Aorta (tissue), 5 donors: ENCODE measurements at regions of chr11 and their contacts with region 1.

Region 1: DNA sequence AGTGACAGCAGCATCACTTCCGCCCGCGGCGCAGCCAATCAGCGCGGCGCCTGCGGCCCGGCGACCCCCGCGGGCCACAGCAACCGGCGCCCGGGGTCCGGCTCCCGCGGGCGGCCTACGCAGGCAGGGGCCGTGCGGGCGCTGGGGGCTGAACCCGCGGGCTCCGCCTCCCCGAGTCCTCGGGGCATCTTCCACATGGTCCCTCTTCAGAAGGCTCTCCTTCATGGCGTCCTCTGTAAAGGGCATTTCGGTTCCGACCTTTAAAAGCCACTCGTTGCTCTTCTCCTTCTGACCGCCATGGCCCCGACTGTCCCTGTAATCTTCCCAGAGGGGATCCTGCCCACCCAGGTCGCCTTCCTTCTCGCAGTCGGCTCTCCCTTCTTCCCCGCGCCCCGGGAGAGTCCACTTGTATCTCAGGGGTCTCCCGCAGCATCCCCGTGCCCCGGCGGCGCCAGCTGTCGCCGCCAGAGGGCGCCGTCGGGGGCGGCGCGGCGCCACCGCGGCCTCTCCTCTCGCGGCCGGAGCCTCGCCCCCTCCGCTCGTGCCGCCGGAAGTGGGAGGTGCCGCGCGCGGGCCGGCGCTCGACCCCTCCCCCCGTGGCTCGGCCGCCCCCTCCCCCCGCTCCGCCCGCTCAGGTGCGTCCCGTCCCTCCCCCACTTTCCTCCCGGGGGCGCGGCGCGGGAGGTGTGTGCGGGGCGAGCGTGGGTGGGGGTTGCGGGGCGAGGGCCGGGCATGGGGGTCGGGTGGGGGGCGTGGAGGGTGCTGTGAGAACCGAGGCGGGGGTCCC is at the start of gene RNF214:
- DNase-seq: peak; percentile 82 to 93
- ATAC-seq: peak; percentile 92
- H3K4me3 ChIP-seq: peak within 1 kb of the TSS; percentile 89 to 91
- H3K27ac ChIP-seq: peak within 1 kb of the TSS; percentile 74 to 78
- H3K4me1 ChIP-seq: peaks cover 0 to 4% of the 10 kb centered on the region in 2 donors
- H3K27me3 ChIP-seq: no peaks in the 10 kb centered on the region
- total RNA-seq, gene RNF214: 27.2 to 32.7 TPM

Region 2: DNA sequence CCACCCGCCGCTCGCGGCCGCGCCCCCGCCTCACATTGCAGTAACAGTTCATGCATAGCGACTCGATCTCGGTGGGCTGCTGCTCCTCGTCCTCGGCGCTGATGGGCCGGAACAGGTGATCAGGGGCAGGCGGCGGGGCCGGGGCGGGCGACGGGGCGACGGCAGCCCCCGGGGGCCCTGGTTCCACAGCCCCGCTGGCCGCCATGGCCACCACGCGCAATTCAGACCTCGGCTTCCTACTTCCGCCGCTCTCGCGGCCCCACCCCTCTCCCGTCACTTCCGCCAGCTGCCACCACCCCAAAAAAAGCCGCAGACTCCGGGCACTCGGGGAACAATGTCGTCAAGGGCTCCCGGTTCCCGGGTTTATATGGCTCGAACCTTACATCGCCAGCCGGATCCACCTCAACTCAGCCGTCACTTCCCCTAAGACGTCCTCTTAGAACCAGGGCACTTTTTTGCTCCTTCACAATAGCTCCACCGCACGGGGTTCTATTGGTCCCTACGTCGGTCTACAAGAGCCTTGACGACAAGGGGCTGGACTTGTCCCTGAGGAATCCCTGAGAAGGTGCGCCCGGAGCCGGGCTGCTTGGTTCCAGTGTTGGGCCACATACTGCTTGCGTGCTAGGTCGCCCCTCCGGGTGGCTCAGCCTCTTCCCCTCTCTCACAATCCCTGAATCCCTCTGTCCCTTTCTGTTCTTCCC is 444.3 kb before region 1 on chr11 and contains the start of gene ZPR1:
- intact Hi-C with region 1: loop called in 1 of 2 experiments (anchors 5 kb)
- DNase-seq: peak; percentile 91 to 95
- ATAC-seq: peak; percentile 92
- H3K4me3 ChIP-seq: peak within 1 kb of the TSS; percentile 73 to 80
- H3K27ac ChIP-seq: peak within 1 kb of the TSS in 1 of 2 donors; percentile 66
- H3K4me1 ChIP-seq: peaks cover 0 to 4% of the 10 kb centered on the region in 2 donors
- H3K27me3 ChIP-seq: no peaks in the 10 kb centered on the region
- total RNA-seq, gene ZPR1: 31.5 to 48.2 TPM

Region 3: GRCh38 chr11:116885951-116886655 is 346.2 kb before region 1 on chr11:
- intact Hi-C with region 1: loop called in 1 of 2 experiments (anchors 5 kb)
- DNase-seq: no peak
- ATAC-seq: peak; percentile 26
- H3K4me3 ChIP-seq: no peak overlapping the region
- H3K27ac ChIP-seq: no peak overlapping the region
- H3K4me1 ChIP-seq: no peaks in the 10 kb centered on the region
- H3K27me3 ChIP-seq: no peaks in the 10 kb centered on the region

Region 4: GRCh38 chr11:117143871-117144476 is 88.3 kb before region 1 on chr11 and contains the start of gene PAFAH1B2:
- intact Hi-C with region 1: loop called in 1 of 2 experiments (anchors 10 kb)
- DNase-seq: peak; percentile 97 to 98
- ATAC-seq: peak; percentile 99
- H3K4me3 ChIP-seq: peak within 1 kb of the TSS; percentile 70 to 80
- H3K27ac ChIP-seq: peak within 1 kb of the TSS; percentile 71 to 88
- H3K4me1 ChIP-seq: peaks cover 0 to 2% of the 10 kb centered on the region in 2 donors
- H3K27me3 ChIP-seq: no peaks in the 10 kb centered on the region
- total RNA-seq, gene PAFAH1B2: 69.9 to 73.5 TPM

Region 5: DNA sequence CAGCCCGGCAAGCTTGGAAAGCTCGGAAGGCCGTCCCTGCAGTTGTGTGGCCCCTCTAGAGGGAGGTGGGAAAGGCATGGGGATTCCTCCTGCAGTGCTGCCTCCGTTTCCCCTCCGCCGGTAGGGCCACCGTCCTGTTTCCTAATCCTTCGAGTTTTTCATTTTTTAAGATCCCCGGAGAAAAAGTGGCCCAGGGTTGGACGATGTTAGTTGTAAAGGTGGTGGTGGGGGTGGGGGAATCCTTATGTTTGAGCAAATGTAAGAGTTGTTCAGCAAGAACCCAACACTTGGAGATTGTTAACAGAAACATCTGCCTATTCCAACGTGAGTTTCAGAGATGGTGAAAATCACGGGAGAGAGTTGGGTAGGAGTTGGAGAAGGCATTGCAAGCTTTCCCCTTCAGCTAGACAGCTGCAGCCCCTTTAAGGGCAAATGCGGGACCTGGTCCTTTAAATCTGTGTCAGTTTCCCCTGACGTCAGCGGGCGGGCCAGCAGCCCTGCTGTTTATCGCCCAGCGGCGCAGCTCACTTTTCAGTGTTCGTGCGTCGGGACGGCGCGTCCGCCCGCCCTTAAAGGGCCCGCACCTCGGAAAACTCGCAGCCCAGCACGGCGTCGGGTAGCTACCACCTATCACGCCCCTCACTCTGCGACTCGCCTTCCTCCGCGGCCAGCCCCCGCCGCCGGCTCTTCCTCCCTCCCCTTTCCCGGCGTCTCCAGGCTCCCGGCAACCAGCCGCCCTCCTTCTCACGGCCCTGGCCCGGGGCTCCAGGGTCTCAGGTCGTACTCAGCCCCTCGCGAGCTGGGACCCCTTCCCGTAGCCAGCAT is 53.9 kb before region 1 on chr11 and contains the start of gene SIDT2:
- intact Hi-C with region 1: loop called (anchors 2 to 5 kb)
- DNase-seq: peak; percentile 97 to 98
- ATAC-seq: peak; percentile 97
- H3K4me3 ChIP-seq: peak within 1 kb of the TSS; percentile 74 to 96
- H3K27ac ChIP-seq: peak within 1 kb of the TSS; percentile 50 to 84
- H3K4me1 ChIP-seq: peaks cover 0 to 3% of the 10 kb centered on the region in 2 donors
- H3K27me3 ChIP-seq: no peaks in the 10 kb centered on the region
- total RNA-seq, gene SIDT2: 51.2 to 81.3 TPM

Region 6: GRCh38 chr11:117189931-117190544 is 42.2 kb before region 1 on chr11:
- intact Hi-C with region 1: no loop called
- DNase-seq: peak; percentile 43 to 62
- ATAC-seq: no peak
- H3K4me3 ChIP-seq: no peak overlapping the region
- H3K27ac ChIP-seq: no peak overlapping the region
- H3K4me1 ChIP-seq: no peaks in the 10 kb centered on the region
- H3K27me3 ChIP-seq: no peaks in the 10 kb centered on the region

Region 7: GRCh38 chr11:117316197-117316961 is 84.1 kb after region 1 on chr11 and contains the start of gene BACE1:
- intact Hi-C with region 1: loop called in 1 of 2 experiments (anchors 5 kb)
- DNase-seq: peak; percentile 88 to 94
- ATAC-seq: peak; percentile 90
- H3K4me3 ChIP-seq: peak within 1 kb of the TSS; percentile 76 to 84
- H3K27ac ChIP-seq: peak within 1 kb of the TSS in 1 of 2 donors; percentile 49
- H3K4me1 ChIP-seq: no peaks in the 10 kb centered on the region
- H3K27me3 ChIP-seq: no peaks in the 10 kb centered on the region
- total RNA-seq, gene BACE1: 29.0 to 36.3 TPM

Region 8: DNA sequence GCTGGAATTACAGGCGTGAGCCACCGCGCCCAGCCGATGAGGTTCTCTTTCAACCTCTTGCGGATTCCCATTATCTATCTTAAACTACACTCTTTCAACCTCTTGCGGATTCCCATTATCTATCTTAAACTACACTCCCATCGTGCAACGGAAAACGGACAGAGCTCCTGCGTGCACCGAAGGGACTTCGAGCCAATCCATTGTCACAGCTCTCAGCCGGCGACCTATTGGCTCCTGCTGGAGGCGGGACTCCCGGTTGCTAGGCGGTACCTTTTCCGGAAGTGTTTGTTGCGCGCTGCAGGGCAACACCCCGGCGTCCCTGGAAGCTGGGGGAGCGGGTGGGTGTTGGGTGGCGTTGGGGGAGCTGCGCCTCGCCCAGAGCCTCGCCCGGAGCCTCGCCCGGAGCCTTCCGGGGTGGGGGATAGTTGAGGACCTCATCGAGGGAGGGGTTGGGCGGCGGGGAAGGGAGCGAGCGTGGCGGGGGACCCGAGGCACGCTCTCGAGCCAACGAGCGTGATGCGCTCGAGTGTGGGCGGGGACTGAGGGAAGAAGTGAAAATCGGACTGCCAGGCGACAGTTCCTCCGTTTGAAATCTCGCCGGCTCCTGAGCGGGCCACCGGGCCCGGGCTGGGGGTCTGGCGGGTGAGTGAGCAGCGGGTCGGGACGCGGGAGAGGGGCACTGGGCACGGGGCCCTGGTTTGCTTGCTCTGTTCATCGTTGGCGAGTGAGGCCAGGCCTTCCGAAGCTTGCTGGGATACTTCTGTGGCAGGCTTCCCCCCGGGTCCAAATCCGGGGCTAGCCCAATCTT is 95.5 kb after region 1 on chr11 and contains the start of gene CEP164:
- intact Hi-C with region 1: loop called in 1 of 2 experiments (anchors 5 kb)
- DNase-seq: peak; percentile 98
- ATAC-seq: peak; percentile 97
- H3K4me3 ChIP-seq: peak within 1 kb of the TSS; percentile 59 to 90
- H3K27ac ChIP-seq: peak within 1 kb of the TSS; percentile 7 to 92
- H3K4me1 ChIP-seq: peaks cover 2 to 6% of the 10 kb centered on the region in 2 donors
- H3K27me3 ChIP-seq: no peaks in the 10 kb centered on the region
- total RNA-seq, gene CEP164: 29.3 to 51.2 TPM